K562 (cell line): ENCODE measurements at regions of chr20 and their contacts with region 1.

Region 1: GRCh38 chr20:35398660-35399144 is 13.1 kb downstream of the UQCC1 start:
- DNase-seq: no peak
- ATAC-seq: no peak
- H3K4me3 ChIP-seq: no peak overlapping the region
- H3K27ac ChIP-seq: no peak overlapping the region
- H3K4me1 ChIP-seq: no peaks in the 10 kb centered on the region
- H3K27me3 ChIP-seq: no peaks in the 10 kb centered on the region
- CTCF ChIP-seq: no peak
- EP300 ChIP-seq: no peak
- POLR2A ChIP-seq: no peak
- RAD21 ChIP-seq: no peak

Region 2: DNA sequence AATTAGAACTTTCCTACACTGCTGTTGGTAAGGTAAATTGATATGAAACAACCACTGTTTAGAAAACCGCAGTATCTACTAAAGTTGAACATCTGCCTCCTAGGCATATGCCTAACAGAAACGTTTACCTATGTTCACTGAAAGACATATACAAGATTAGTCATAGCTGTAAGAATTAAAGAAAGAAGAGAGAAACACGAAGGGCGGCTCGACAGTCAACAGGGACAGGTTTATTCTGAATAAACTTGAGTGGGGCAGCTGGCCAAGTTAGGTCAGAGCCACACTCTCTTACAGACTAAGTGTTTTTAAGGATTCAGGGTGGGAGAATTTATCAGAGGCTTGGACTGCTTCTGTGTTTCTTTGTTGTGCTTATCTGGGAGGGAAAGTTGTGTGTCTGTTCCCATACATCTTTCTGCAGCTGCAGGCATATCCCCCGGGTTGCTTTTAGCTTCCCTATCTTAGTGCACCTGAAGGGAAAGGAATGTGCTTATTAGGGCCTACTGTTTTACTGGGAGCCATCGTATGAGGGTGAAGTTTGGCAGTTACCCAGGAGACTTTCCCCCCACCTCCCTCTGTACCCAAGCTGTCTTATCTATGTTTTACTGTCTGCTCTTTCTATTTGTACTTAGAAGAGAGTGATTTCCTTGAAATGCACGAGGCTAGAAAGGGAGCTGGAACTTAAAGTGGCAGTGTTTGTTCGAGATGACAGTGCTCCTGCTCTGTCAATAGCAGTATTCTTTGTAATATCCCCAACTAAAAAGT is 206.4 kb before region 1 on chr20:
- CTCF ChIA-PET with region 1: no interaction called
- POLR2A ChIA-PET with region 1: no interaction called
- in situ Hi-C with region 1: no loop called
- intact Hi-C with region 1: no loop called
- DNase-seq: peak in 2 of 4 experiments; percentile 66 to 91
- ATAC-seq: peak; percentile 80
- H3K4me3 ChIP-seq: no peak overlapping the region
- H3K27ac ChIP-seq: peak overlapping the region; percentile 75
- H3K4me1 ChIP-seq: peaks cover 22 to 29% of the 10 kb centered on the region in 2 experiments
- H3K27me3 ChIP-seq: no peaks in the 10 kb centered on the region
- CTCF ChIP-seq: no peak
- EP300 ChIP-seq: peak; percentile 66; the same call in 1 of the 2 replicates
- POLR2A ChIP-seq: no peak
- RAD21 ChIP-seq: no peak

Region 3: GRCh38 chr20:35387334-35387733 is 11.4 kb before region 1 on chr20:
- CTCF ChIA-PET with region 1: no interaction called
- POLR2A ChIA-PET with region 1: interaction called, 13 read pairs
- in situ Hi-C with region 1: no loop called
- intact Hi-C with region 1: no loop called
- DNase-seq: no peak
- ATAC-seq: no peak
- H3K4me3 ChIP-seq: no peak overlapping the region
- H3K27ac ChIP-seq: no peak overlapping the region
- H3K4me1 ChIP-seq: peaks cover 0 to 2% of the 10 kb centered on the region in 2 experiments; a peak in 1 of 5 replicates
- H3K27me3 ChIP-seq: no peaks in the 10 kb centered on the region
- CTCF ChIP-seq: no peak
- EP300 ChIP-seq: no peak
- POLR2A ChIP-seq: no peak
- RAD21 ChIP-seq: no peak

Region 4: GRCh38 chr20:35523298-35523888 is 124.7 kb after region 1 on chr20:
- CTCF ChIA-PET with region 1: no interaction called
- POLR2A ChIA-PET with region 1: no interaction called
- in situ Hi-C with region 1: no loop called
- intact Hi-C with region 1: no loop called
- DNase-seq: peak; percentile 59 to 70 (median 67)
- ATAC-seq: peak; percentile 95
- H3K4me3 ChIP-seq: no peak overlapping the region
- H3K27ac ChIP-seq: no peak overlapping the region
- H3K4me1 ChIP-seq: no peaks in the 10 kb centered on the region
- H3K27me3 ChIP-seq: no peaks in the 10 kb centered on the region
- CTCF ChIP-seq: peak; percentile 68 to 77 (median 74)
- EP300 ChIP-seq: no peak
- POLR2A ChIP-seq: no peak
- RAD21 ChIP-seq: peak in 1 of 2 experiments; percentile 41; a peak in 1 of 4 replicates